ENCODE measurements at regions of chr19 and their contacts with region 1.

Region 1: GRCh38 chr19:11694533-11695439 is 44.0 kb downstream of the ZNF823 start:
- DNase-seq: peak; percentile 97 to 98 (median 97)
- ATAC-seq: peak; percentile 99
- H3K4me3 ChIP-seq: peak overlapping the region; percentile 93
- H3K27ac ChIP-seq: peak overlapping the region; percentile 82
- H3K4me1 ChIP-seq: peaks cover 4 to 6% of the 10 kb centered on the region in 2 experiments; a peak in 4 of 5 replicates
- H3K27me3 ChIP-seq: no peaks in the 10 kb centered on the region
- CTCF ChIP-seq: no peak
- EP300 ChIP-seq: no peak
- POLR2A ChIP-seq: peak; percentile 84
- RAD21 ChIP-seq: no peak

Region 2: DNA sequence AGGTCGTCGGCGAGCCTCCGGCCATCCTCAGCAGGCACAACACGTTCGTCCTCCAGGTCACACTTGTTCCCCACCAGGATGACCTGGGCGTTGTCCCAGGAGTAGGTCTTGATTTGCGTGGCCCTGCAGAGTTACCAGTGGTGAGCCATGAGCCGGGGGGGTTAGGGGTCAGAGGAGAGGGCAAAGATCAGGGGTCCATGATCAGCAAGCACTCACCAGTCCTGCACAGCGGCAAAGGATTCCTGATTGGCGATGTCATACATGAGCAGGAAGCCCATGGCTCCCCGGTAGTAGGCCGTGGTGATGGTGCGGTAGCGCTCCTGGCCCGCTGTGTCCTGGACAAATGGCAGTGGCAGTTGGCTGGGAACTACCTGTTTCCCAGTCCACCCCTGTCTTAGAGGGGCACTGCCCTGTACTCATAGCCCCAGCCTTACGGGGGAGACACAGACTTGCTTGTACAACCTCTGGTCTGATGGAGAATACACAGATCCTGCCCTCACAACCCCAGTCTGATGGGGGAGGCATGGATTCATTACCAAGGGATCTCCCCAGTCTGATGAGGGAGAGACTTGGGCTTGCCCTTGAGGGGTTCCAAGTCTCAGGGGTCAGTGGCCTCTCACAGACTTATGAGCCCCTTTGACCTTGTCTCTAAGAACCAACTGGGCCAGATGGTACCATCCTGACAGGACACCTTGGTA is 359.2 kb before region 1 on chr19:
- CTCF ChIA-PET with region 1: no interaction called
- POLR2A ChIA-PET with region 1: no interaction called
- in situ Hi-C with region 1: no loop called
- intact Hi-C with region 1: no loop called
- DNase-seq: no peak
- ATAC-seq: no peak
- H3K4me3 ChIP-seq: no peak overlapping the region
- H3K27ac ChIP-seq: no peak overlapping the region
- H3K4me1 ChIP-seq: peaks cover 3 to 21% of the 10 kb centered on the region in 2 experiments; a peak in 3 of 5 replicates
- H3K27me3 ChIP-seq: no peaks in the 10 kb centered on the region
- CTCF ChIP-seq: no peak
- EP300 ChIP-seq: no peak
- POLR2A ChIP-seq: no peak
- RAD21 ChIP-seq: no peak

Region 3: GRCh38 chr19:11558881-11559828 is 135.6 kb before region 1 on chr19 and contains the start of gene ELOF1:
- CTCF ChIA-PET with region 1: no interaction called
- POLR2A ChIA-PET with region 1: no interaction called
- in situ Hi-C with region 1: no loop called
- intact Hi-C with region 1: loop called (anchors 5 kb)
- DNase-seq: peak; percentile 94 to 100 (median 96)
- ATAC-seq: peak; percentile 92
- H3K4me3 ChIP-seq: peak within 1 kb of the TSS; percentile 88
- H3K27ac ChIP-seq: peak within 1 kb of the TSS; percentile 94
- H3K4me1 ChIP-seq: peaks cover 38 to 41% of the 10 kb centered on the region in 2 experiments
- H3K27me3 ChIP-seq: no peaks in the 10 kb centered on the region
- CTCF ChIP-seq: peak in 2 of 3 experiments; percentile 20 to 25; a peak in 4 of 6 replicates
- EP300 ChIP-seq: no peak; the same call in 1 of the 2 replicates
- POLR2A ChIP-seq: peak; percentile 97
- RAD21 ChIP-seq: peak in 1 of 2 experiments; percentile 30; a peak in 3 of 4 replicates
- polyA plus RNA-seq, gene ELOF1: 16.7 to 49.1 TPM

Region 4: GRCh38 chr19:11639602-11640471 is 54.9 kb before region 1 on chr19:
- CTCF ChIA-PET with region 1: no interaction called
- POLR2A ChIA-PET with region 1: no interaction called
- in situ Hi-C with region 1: no loop called
- intact Hi-C with region 1: loop called (anchors 2 kb)
- DNase-seq: peak; percentile 98
- ATAC-seq: peak; percentile 99
- H3K4me3 ChIP-seq: peak overlapping the region; percentile 85
- H3K27ac ChIP-seq: peak overlapping the region; percentile 82
- H3K4me1 ChIP-seq: peaks cover 5 to 19% of the 10 kb centered on the region in 2 experiments; a peak in 4 of 5 replicates
- H3K27me3 ChIP-seq: no peaks in the 10 kb centered on the region
- CTCF ChIP-seq: no peak
- EP300 ChIP-seq: no peak
- POLR2A ChIP-seq: peak; percentile 86
- RAD21 ChIP-seq: no peak

Region 5: GRCh38 chr19:11856596-11857250 is 161.9 kb after region 1 on chr19:
- CTCF ChIA-PET with region 1: interaction called, 3 read pairs
- POLR2A ChIA-PET with region 1: interaction called, 3 read pairs
- in situ Hi-C with region 1: no loop called
- intact Hi-C with region 1: loop called (anchors 10 kb)
- DNase-seq: no peak
- ATAC-seq: no peak
- H3K4me3 ChIP-seq: no peak overlapping the region
- H3K27ac ChIP-seq: no peak overlapping the region
- H3K4me1 ChIP-seq: no peaks in the 10 kb centered on the region
- H3K27me3 ChIP-seq: peaks cover 5 to 17% of the 10 kb centered on the region in 2 experiments
- CTCF ChIP-seq: no peak
- EP300 ChIP-seq: no peak
- POLR2A ChIP-seq: no peak
- RAD21 ChIP-seq: no peak

Measured in K562 (cell line).